ENCODE measurements at regions of chr12 and their contacts with region 1.

Region 1: GRCh38 chr12:65685514-65685913 is 138.8 kb upstream of the HMGA2 start:
- DNase-seq: peak; percentile 11
- CTCF ChIP-seq: peak; percentile 18

Region 2: GRCh38 chr12:65306366-65307168 is 378.9 kb before region 1 on chr12:
- in situ Hi-C with region 1: loop called (anchors 25 kb)
- DNase-seq: no peak
- CTCF ChIP-seq: peak; percentile 43

Region 3: GRCh38 chr12:65822732-65823512 is 137.4 kb after region 1 on chr12:
- in situ Hi-C with region 1: no loop called
- DNase-seq: peak; percentile 56
- CTCF ChIP-seq: no peak